Mammary epithelial cell (primary cell): ENCODE measurements at regions of chr2 and their contacts with region 1.

Region 1: DNA sequence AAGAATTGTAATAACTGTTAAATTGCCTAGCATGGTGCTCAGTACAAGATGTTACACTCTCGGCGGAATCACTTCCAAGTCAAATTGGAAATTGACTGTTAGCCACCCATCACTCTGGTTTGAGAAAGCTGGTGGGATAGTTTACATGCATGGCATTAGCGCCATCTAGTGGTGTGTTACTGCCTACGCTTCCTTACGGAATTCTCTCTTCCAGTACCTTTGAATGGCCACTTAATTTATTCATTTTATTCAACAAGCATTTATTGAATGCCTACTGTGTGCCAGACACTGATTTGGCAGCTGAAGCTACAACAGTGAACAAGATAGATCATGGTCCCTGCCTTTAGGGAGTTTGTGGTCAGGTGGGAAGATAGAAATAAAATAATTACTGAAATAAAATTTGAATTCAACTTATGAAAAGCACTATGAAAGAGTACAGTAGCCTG is 171.2 kb downstream of the TMEM247 start:
- DNase-seq: peak; percentile 69
- H3K4me3 ChIP-seq: no peak overlapping the region
- H3K27ac ChIP-seq: no peak overlapping the region
- H3K4me1 ChIP-seq: peaks cover 28% of the 10 kb centered on the region
- H3K27me3 ChIP-seq: no peaks in the 10 kb centered on the region
- CTCF ChIP-seq: peak; percentile 92 to 95

Region 2: GRCh38 chr2:45930396-45930792 is 720.2 kb before region 1 on chr2:
- CTCF ChIA-PET with region 1: no interaction called
- dilution Hi-C with region 1: no loop called
- in situ Hi-C with region 1: no loop called
- intact Hi-C with region 1: no loop called
- DNase-seq: peak; percentile 39
- H3K4me3 ChIP-seq: no peak overlapping the region
- H3K27ac ChIP-seq: no peak overlapping the region
- H3K4me1 ChIP-seq: peaks cover 9% of the 10 kb centered on the region
- H3K27me3 ChIP-seq: no peaks in the 10 kb centered on the region
- CTCF ChIP-seq: no peak

Region 3: DNA sequence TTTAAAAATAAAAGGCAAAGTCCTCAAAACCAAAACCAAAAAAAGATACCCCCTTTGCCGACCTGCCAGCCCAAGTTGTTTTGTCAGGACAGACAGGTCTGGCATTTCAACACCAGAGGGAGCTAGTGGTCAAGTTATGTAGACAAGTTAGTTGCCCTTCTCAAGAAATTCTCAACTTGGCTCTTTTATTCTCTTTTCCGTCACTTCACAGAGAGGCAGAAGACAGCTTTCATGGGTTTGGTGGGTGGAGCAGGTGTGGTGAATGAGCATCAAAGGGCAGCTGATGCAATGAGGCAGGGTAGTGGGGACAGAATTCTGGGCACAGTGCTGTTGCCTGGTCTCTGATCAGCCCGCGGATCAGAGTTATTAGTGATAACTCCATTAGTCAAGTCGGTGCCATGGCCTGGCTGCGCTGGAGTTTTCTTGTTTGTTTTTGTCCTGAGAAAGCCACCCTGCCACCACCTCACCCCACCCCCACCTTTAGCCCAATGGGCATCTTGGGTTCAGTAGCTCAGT is 657.0 kb before region 1 on chr2:
- CTCF ChIA-PET with region 1: no interaction called
- dilution Hi-C with region 1: no loop called
- in situ Hi-C with region 1: no loop called
- intact Hi-C with region 1: loop called (anchors 2 kb)
- DNase-seq: peak; percentile 58
- H3K4me3 ChIP-seq: no peak overlapping the region
- H3K27ac ChIP-seq: no peak overlapping the region
- H3K4me1 ChIP-seq: peaks cover 19% of the 10 kb centered on the region
- H3K27me3 ChIP-seq: no peaks in the 10 kb centered on the region
- CTCF ChIP-seq: peak; percentile 78 to 79

Region 4: GRCh38 chr2:46385786-46386577 is 264.6 kb before region 1 on chr2:
- CTCF ChIA-PET with region 1: no interaction called
- dilution Hi-C with region 1: no loop called
- in situ Hi-C with region 1: no loop called
- intact Hi-C with region 1: loop called (anchors 10 kb)
- DNase-seq: peak; percentile 79
- H3K4me3 ChIP-seq: no peak overlapping the region
- H3K27ac ChIP-seq: peak overlapping the region; percentile 30
- H3K4me1 ChIP-seq: peaks cover 34% of the 10 kb centered on the region
- H3K27me3 ChIP-seq: no peaks in the 10 kb centered on the region
- CTCF ChIP-seq: peak in 1 of 2 donors; percentile 16

Region 5: GRCh38 chr2:46469116-46469515 is 181.5 kb before region 1 on chr2:
- CTCF ChIA-PET with region 1: no interaction called
- dilution Hi-C with region 1: no loop called
- in situ Hi-C with region 1: loop called in 1 of 2 experiments (anchors 5 kb)
- intact Hi-C with region 1: no loop called
- DNase-seq: peak; percentile 37
- H3K4me3 ChIP-seq: no peak overlapping the region
- H3K27ac ChIP-seq: no peak overlapping the region
- H3K4me1 ChIP-seq: peaks cover 9% of the 10 kb centered on the region
- H3K27me3 ChIP-seq: no peaks in the 10 kb centered on the region
- CTCF ChIP-seq: no peak

Region 6: GRCh38 chr2:46632349-46632748 is 18.2 kb before region 1 on chr2:
- CTCF ChIA-PET with region 1: no interaction called
- dilution Hi-C with region 1: no loop called
- in situ Hi-C with region 1: no loop called
- intact Hi-C with region 1: loop called (anchors 1 kb)
- DNase-seq: peak; percentile 41
- H3K4me3 ChIP-seq: no peak overlapping the region
- H3K27ac ChIP-seq: no peak overlapping the region
- H3K4me1 ChIP-seq: no peaks in the 10 kb centered on the region
- H3K27me3 ChIP-seq: peaks cover 8% of the 10 kb centered on the region
- CTCF ChIP-seq: peak; percentile 57 to 60

Region 7: GRCh38 chr2:46666044-46666679 is 15.6 kb after region 1 on chr2:
- CTCF ChIA-PET with region 1: no interaction called
- dilution Hi-C with region 1: no loop called
- in situ Hi-C with region 1: no loop called
- intact Hi-C with region 1: no loop called
- DNase-seq: no peak
- H3K4me3 ChIP-seq: no peak overlapping the region
- H3K27ac ChIP-seq: no peak overlapping the region
- H3K4me1 ChIP-seq: no peaks in the 10 kb centered on the region
- H3K27me3 ChIP-seq: no peaks in the 10 kb centered on the region
- CTCF ChIP-seq: no peak

Region 8: DNA sequence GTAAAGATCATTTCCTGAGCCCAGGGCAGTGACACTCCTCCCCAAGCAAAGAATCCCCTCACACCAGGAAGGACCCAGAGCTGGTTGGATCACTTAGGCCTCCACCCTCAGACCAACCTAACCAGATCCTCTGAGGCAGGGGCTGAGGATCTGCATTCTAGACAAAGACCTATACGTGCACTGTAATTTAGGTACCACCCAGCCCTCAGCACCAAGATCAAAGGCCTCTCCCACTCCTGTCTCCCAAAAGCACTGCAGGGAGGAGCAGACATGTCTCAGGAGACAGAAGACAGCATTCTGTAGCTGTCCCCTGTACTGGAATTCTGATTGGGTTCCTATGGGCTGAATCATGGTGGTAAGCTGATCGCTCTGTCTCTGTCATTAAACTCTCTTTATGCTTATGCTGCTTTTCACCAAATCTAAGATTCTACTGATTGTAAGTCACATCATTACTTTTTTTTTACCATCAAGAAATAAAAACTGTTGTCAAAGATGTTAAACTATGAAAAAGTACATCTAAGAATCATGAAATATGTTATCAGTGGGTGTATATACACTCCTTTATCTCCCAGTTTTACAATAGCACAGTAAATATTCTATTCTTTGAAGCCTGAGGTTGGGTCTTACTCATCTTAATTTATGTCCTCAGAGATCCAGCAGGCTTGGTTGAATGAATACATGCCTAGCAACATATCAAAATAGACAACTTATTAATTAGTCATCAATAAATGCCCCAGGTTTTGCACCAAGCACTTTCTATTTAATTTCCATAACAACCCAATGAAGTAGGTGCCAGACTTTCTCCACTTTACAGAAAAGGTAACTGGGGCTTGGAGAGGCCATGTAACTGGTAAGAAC is 236.7 kb after region 1 on chr2:
- CTCF ChIA-PET with region 1: interaction called, 4 read pairs
- dilution Hi-C with region 1: no loop called
- in situ Hi-C with region 1: no loop called
- intact Hi-C with region 1: loop called (anchors 2 kb)
- DNase-seq: no peak
- H3K4me3 ChIP-seq: no peak overlapping the region
- H3K27ac ChIP-seq: no peak overlapping the region
- H3K4me1 ChIP-seq: peaks cover 4% of the 10 kb centered on the region
- H3K27me3 ChIP-seq: no peaks in the 10 kb centered on the region
- CTCF ChIP-seq: no peak